ENCODE measurements at regions of chr5 and their contacts with region 1.

Region 1: GRCh38 chr5:40367255-40367654 is 312.5 kb upstream of the PTGER4 start:
- DNase-seq: no peak
- H3K4me3 Mint-ChIP-seq: no peak overlapping the region
- H3K27ac Mint-ChIP-seq: no peak overlapping the region
- H3K4me1 Mint-ChIP-seq: peaks cover 13% of the 10 kb centered on the region
- H3K27me3 Mint-ChIP-seq: peaks cover 6% of the 10 kb centered on the region

Region 2: GRCh38 chr5:40378396-40379177 is 11.3 kb after region 1 on chr5:
- intact Hi-C with region 1: loop called (anchors 1 kb)
- DNase-seq: no peak
- H3K4me3 Mint-ChIP-seq: peak overlapping the region; percentile 11
- H3K27ac Mint-ChIP-seq: peak overlapping the region; percentile 52
- H3K4me1 Mint-ChIP-seq: peaks cover 51% of the 10 kb centered on the region
- H3K27me3 Mint-ChIP-seq: no peaks in the 10 kb centered on the region

Region 3: GRCh38 chr5:40736103-40736875 is 369.0 kb after region 1 on chr5:
- intact Hi-C with region 1: no loop called
- DNase-seq: no peak
- H3K4me3 Mint-ChIP-seq: no peak overlapping the region
- H3K27ac Mint-ChIP-seq: no peak overlapping the region
- H3K4me1 Mint-ChIP-seq: peaks cover 22% of the 10 kb centered on the region
- H3K27me3 Mint-ChIP-seq: no peaks in the 10 kb centered on the region